Gastrocnemius medialis (tissue), 4 donors: ENCODE measurements at regions of chr5 and their contacts with region 1.

Region 1: GRCh38 chr5:149357370-149358293 is at the start of gene PCYOX1L:
- DNase-seq: peak; percentile 93 to 94
- ATAC-seq: peak; percentile 98 to 99
- H3K4me3 ChIP-seq: peak within 1 kb of the TSS; percentile 67 to 92 (median 80)
- H3K27ac ChIP-seq: peak within 1 kb of the TSS; percentile 50 to 64 (median 58)
- H3K4me1 ChIP-seq: peaks cover 3 to 9% of the 10 kb centered on the region in 2 donors
- H3K27me3 ChIP-seq: no peaks in the 10 kb centered on the region
- CTCF ChIP-seq: no peak
- POLR2A ChIP-seq: peak in 1 of 2 donors; percentile 6
- total RNA-seq, gene PCYOX1L: 0.29 to 1.5 (median 1.2) TPM

Region 2: DNA sequence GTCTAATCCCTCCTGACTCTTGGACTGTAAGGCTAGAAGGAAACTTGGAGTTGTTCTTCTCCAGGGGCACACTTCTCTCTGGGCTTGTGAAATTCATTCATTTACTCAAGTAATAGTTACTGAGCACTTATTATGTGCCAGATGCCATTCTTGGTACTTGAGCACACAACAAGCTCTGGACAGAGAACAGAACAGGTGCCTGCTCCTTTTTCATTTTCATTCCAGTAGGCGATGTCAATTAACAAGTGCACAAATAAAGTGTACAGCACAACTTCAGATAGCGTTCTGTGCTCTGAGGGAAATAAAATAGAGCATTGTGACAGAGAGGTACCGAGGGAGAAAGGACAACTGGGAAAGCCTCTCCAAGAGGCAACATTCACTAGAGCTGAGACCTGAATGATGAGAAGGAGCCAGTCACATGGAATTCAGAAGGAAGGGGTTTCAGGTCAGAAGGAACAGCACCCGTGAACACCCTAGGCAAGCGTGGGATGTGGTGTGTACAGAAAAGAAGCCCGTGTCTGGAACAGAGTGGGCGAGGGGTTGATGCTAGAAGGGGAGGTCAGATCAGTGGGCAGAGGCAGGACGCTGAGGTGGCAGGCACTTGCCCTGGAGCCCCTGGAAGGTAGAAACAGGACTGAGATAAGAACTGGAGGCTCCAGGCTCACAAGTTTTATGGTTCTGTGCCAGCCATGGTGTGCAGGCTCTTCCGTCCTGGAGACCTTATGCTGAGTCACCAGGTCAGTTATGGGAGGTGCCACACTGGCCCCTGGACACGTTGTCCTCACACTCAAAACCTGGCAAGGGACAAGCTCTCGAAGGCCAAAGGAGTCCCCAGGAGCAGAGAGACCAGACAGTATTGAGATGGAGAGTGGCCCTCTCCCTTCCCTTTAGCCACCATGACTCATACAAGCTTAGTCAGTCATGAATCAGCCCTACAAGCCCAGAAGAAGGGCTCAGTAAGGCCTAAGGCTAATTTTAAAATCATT is 223.5 kb before region 1 on chr5:
- in situ Hi-C with region 1: no loop called
- intact Hi-C with region 1: loop called (anchors 10 kb)
- DNase-seq: peak; percentile 71 to 93
- ATAC-seq: peak; percentile 88 to 89
- H3K4me3 ChIP-seq: no peak overlapping the region
- H3K27ac ChIP-seq: peak overlapping the region; percentile 65 to 91 (median 88)
- H3K4me1 ChIP-seq: peaks cover 14 to 34% of the 10 kb centered on the region in 2 donors
- H3K27me3 ChIP-seq: no peaks in the 10 kb centered on the region
- CTCF ChIP-seq: no peak
- POLR2A ChIP-seq: peak in 1 of 2 donors; percentile 42

Region 3: GRCh38 chr5:149254506-149254905 is 103.1 kb before region 1 on chr5:
- in situ Hi-C with region 1: no loop called
- intact Hi-C with region 1: no loop called
- DNase-seq: no peak
- ATAC-seq: no peak
- H3K4me3 ChIP-seq: no peak overlapping the region
- H3K27ac ChIP-seq: no peak overlapping the region
- H3K4me1 ChIP-seq: no peaks in the 10 kb centered on the region
- H3K27me3 ChIP-seq: no peaks in the 10 kb centered on the region
- CTCF ChIP-seq: no peak
- POLR2A ChIP-seq: no peak